ENCODE measurements at regions of chr9 and their contacts with region 1.

Region 1: DNA sequence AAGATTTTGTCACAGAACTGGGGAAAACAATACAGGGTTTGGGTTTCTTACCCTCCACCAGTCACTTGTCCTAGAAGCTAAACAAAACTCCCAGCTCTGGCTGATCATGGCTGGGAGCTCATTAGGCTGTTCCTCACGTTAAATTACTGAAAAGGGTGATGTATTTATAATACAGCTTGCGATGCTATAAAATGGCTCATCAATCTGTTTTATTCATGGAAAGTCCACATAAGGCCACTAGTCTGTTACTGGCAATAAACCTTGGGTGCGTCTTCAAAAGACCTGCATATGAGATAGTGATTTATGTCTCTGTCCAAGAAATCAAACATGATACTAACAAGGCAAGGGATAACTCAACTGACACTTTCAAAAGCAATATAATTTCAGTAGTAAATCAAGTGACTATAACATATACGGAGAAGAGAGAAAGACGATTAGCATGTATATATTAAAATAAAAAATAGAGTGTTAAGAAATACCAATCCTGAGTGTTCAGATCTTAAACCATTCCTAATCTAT is 219.0 kb downstream of the BNC2 start:
- DNase-seq: no peak
- H3K4me3 ChIP-seq: no peak overlapping the region
- H3K27ac ChIP-seq: no peak overlapping the region
- H3K4me1 ChIP-seq: peaks cover 5 to 25% (median 19%) of the 10 kb centered on the region in 4 experiments; a peak in 5 of 7 replicates
- H3K27me3 ChIP-seq: no peaks in the 10 kb centered on the region
- CTCF ChIP-seq: no peak
- EP300 ChIP-seq: no peak
- POLR2A ChIP-seq: no peak
- RAD21 ChIP-seq: no peak

Region 2: GRCh38 chr9:16640649-16641048 is 10.9 kb before region 1 on chr9:
- CTCF ChIA-PET with region 1: interaction called, 12 read pairs
- POLR2A ChIA-PET with region 1: interaction called, 3 read pairs
- DNase-seq: no peak
- H3K4me3 ChIP-seq: no peak overlapping the region
- H3K27ac ChIP-seq: no peak overlapping the region
- H3K4me1 ChIP-seq: peaks cover 0 to 7% (median 3%) of the 10 kb centered on the region in 4 experiments; a peak in 4 of 7 replicates
- H3K27me3 ChIP-seq: no peaks in the 10 kb centered on the region
- CTCF ChIP-seq: peak; percentile 24 to 52 (median 40); a peak in 3 of 4 replicates
- EP300 ChIP-seq: no peak
- POLR2A ChIP-seq: no peak
- RAD21 ChIP-seq: peak; percentile 47 to 53

Measured in H1 (cell line).